Psoas muscle (tissue), 8 donors: ENCODE measurements at regions of chr21 and their contacts with region 1.

Region 1: GRCh38 chr21:28714777-28715464 is 277.8 kb downstream of the LTN1 start:
- DNase-seq: no peak
- ATAC-seq: peak; percentile 73 to 85 (median 80)
- H3K4me3 ChIP-seq: no peak overlapping the region
- H3K27ac ChIP-seq: no peak overlapping the region
- H3K4me1 ChIP-seq: peaks cover 14% of the 10 kb centered on the region
- H3K27me3 ChIP-seq: no peaks in the 10 kb centered on the region
- CTCF ChIP-seq: no peak

Region 2: GRCh38 chr21:28615276-28615675 is 99.6 kb before region 1 on chr21:
- intact Hi-C with region 1: no loop called
- DNase-seq: no peak
- ATAC-seq: no peak
- H3K4me3 ChIP-seq: no peak overlapping the region
- H3K27ac ChIP-seq: no peak overlapping the region
- H3K4me1 ChIP-seq: no peaks in the 10 kb centered on the region
- H3K27me3 ChIP-seq: no peaks in the 10 kb centered on the region
- CTCF ChIP-seq: no peak

Region 3: DNA sequence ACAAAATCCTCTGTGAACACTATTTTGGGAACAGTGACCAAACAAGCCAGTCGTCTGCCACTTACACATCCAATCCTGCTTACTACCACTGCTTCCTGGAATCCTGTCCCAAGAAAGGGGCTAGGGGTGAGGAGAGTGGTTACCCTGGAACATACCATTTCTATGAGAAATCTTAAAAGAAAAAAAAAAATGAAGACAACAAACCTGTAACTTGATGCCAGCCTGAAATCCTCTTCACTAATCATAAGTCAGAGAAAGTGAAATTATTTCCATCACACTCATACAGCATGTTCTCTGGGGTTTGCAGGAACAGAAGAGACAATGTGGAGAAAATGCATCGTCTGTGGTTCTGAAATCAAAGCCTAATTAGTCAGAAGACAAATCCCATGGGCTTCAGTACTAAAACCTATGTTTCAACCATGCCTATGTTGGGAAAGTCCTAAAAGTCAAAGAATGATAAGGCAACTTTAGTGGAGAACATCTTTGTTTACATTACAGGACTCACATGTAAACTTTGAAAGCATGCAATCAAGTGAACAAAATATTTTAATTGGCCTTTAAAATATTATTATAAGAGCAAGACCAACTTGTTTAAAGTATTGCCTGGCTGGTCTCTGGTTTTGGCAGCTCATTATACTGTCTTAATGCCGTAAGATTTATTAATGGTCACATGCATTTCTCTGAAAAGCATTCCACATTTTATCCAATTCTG is 57.0 kb after region 1 on chr21:
- intact Hi-C with region 1: loop called in 1 of 2 experiments (anchors 10 kb)
- DNase-seq: no peak
- ATAC-seq: peak; percentile 74 to 92 (median 85)
- H3K4me3 ChIP-seq: no peak overlapping the region
- H3K27ac ChIP-seq: peak overlapping the region; percentile 64
- H3K4me1 ChIP-seq: peaks cover 18% of the 10 kb centered on the region
- H3K27me3 ChIP-seq: no peaks in the 10 kb centered on the region
- CTCF ChIP-seq: no peak